Activated B cell treated with CpG ODN at 0.5 μM for 24 hours (primary cell): ENCODE measurements at regions of chr9 and their contacts with region 1.

Region 1: DNA sequence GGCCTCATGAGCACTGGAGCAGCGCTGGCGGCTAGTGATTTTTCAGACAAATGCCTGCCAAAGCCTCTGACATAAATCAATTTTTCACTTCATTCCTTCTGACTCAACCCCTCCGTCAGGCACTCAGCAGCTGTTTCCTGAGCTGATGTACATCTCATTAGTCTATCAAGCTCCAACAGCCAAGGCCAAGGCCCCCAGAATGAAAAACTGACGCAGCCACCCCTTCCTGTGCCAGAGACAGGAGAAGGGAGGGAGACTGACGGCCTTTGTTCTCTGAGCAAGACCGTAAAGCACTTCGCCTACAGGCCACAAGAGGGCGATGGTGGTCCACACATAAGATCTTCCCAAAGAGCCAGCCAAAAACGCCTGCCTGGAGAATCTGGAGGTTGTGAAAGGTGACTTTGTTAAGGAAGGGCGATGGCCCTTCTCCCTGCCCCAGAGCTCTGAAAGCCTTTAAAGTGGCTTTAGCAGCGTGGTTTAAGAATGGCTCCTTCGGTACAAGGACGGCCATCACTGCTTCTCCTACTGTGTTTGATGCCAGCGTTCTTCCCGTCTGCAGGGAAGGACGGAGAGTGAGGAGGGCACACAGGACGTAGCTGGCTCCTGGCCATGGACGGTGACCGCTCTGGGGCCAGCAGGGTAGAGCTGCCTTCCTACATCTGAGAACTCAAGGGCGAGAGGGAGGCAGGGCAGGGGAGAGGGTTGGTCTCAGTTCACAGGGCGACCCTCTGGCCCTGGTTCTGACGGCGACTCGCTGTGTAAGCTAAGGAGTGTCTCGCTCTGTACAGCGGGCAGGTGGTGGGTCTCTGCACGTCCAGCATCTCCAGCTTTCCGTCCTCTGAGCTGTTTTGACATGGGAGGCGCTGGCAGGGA is 37.0 kb downstream of the ALG2 start:
- DNase-seq: peak; percentile 76
- ATAC-seq: peak; percentile 80
- H3K4me3 Mint-ChIP-seq: peak overlapping the region; percentile 57
- H3K27ac Mint-ChIP-seq: peak overlapping the region; percentile 95
- H3K4me1 Mint-ChIP-seq: peaks cover 98% of the 10 kb centered on the region
- H3K27me3 Mint-ChIP-seq: no peaks in the 10 kb centered on the region
- CTCF ChIP-seq: peak; percentile 81

Region 2: DNA sequence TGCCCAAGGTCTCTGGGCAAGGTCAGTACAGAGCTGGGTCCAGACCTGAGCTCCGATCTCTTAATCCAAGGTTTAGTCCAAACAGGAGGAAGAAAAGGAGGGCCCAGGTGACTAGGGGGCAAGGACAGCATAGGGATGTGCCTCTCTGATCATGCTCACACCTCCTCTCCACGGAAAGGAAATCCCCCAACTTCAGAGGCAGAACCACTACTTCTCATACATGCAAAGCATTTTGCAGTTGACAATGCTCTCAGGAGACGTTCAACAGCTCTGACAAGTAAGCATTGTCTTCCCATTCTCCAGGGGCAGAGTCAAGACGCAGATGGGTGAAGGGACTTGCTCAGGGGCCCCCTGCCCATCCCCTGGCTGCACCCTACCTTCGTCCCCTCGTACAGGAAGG is 983.6 kb before region 1 on chr9:
- CTCF ChIA-PET with region 1: no interaction called
- POLR2A ChIA-PET with region 1: no interaction called
- intact Hi-C with region 1: no loop called
- DNase-seq: no peak
- ATAC-seq: peak; percentile 76
- H3K4me3 Mint-ChIP-seq: no peak overlapping the region
- H3K27ac Mint-ChIP-seq: peak overlapping the region; percentile 44
- H3K4me1 Mint-ChIP-seq: peaks cover 13% of the 10 kb centered on the region
- H3K27me3 Mint-ChIP-seq: no peaks in the 10 kb centered on the region
- CTCF ChIP-seq: no peak

Region 3: DNA sequence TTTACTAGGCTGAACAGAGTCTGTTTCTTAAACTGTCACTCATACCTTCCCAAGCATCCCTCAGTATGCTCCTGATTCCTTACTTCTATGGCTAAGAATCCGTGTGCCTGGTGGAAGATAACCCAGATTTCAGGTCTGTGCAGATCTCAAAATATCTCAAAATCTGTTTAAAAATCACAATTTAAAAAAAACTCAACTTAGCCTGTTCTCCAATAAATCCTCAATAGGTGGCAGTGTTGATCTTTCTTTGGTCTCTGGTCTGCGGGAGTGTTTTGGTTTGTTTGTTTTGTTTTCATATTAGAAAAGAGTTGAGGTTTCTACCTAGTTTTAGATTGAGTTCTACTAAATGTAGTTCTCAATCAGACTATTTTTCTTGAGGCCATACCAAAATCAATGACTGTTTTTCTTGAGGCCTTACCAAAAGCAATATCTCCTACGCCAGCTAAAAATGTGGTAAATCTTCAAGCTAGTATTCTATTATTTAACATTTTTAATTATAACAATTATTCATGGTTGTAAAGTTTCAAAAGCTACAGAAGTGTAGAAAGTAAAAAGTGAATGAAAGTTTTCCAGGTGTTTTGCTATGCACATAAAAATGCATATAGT is 21.8 kb before region 1 on chr9:
- CTCF ChIA-PET with region 1: interaction called, 120 read pairs
- POLR2A ChIA-PET with region 1: interaction called, 157 read pairs
- intact Hi-C with region 1: loop called (anchors 1 kb)
- DNase-seq: no peak
- ATAC-seq: peak; percentile 55
- H3K4me3 Mint-ChIP-seq: no peak overlapping the region
- H3K27ac Mint-ChIP-seq: peak overlapping the region; percentile 66
- H3K4me1 Mint-ChIP-seq: peaks cover 45% of the 10 kb centered on the region
- H3K27me3 Mint-ChIP-seq: no peaks in the 10 kb centered on the region
- CTCF ChIP-seq: peak; percentile 22

Region 4: GRCh38 chr9:99231711-99232110 is 47.0 kb after region 1 on chr9:
- CTCF ChIA-PET with region 1: interaction called, 89 read pairs
- POLR2A ChIA-PET with region 1: interaction called, 73 read pairs
- intact Hi-C with region 1: loop called (anchors 1 kb)
- DNase-seq: peak; percentile 46
- ATAC-seq: peak; percentile 11
- H3K4me3 Mint-ChIP-seq: peak overlapping the region; percentile 47
- H3K27ac Mint-ChIP-seq: peak overlapping the region; percentile 65
- H3K4me1 Mint-ChIP-seq: peaks cover 45% of the 10 kb centered on the region
- H3K27me3 Mint-ChIP-seq: no peaks in the 10 kb centered on the region
- CTCF ChIP-seq: no peak

Region 5: GRCh38 chr9:99513441-99514112 is 328.9 kb after region 1 on chr9:
- CTCF ChIA-PET with region 1: interaction called, 3 read pairs
- POLR2A ChIA-PET with region 1: interaction called, 7 read pairs
- intact Hi-C with region 1: loop called (anchors 5 kb)
- DNase-seq: peak; percentile 22
- ATAC-seq: peak; percentile 49
- H3K4me3 Mint-ChIP-seq: peak overlapping the region; percentile 61
- H3K27ac Mint-ChIP-seq: peak overlapping the region; percentile 84
- H3K4me1 Mint-ChIP-seq: peaks cover 88% of the 10 kb centered on the region
- H3K27me3 Mint-ChIP-seq: no peaks in the 10 kb centered on the region
- CTCF ChIP-seq: no peak

Region 6: DNA sequence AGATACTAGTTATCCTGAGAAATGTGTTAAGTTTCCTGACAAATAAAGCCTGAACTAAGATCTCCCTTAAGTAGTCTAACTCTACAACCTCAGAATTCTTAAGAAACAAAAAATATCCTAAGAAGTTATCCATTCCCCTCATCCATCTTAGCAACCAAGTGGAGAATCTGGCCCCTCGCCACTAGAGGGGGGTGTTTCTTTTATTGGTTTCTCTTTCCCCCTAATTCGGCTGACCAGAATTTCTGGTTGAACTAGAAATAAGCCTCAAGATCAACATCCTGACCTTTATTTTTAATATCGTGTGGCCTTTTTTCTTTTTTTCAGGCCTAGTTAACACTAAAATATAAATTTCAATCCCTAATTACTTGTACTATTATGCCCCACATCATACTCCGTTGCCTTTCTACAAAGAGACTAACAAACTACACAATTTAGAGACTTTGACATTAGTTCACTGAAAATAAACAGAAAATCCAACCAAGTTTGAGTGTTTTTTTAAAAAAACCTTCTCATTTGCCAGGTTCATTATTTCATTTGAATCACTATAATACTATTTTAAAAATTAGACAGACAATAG is 622.7 kb after region 1 on chr9:
- CTCF ChIA-PET with region 1: interaction called, 3 read pairs
- POLR2A ChIA-PET with region 1: no interaction called
- intact Hi-C with region 1: loop called (anchors 1 kb)
- DNase-seq: no peak
- ATAC-seq: peak; percentile 65
- H3K4me3 Mint-ChIP-seq: no peak overlapping the region
- H3K27ac Mint-ChIP-seq: peak overlapping the region; percentile 5
- H3K4me1 Mint-ChIP-seq: peaks cover 28% of the 10 kb centered on the region
- H3K27me3 Mint-ChIP-seq: no peaks in the 10 kb centered on the region
- CTCF ChIP-seq: no peak

Region 7: GRCh38 chr9:100028201-100028784 is 843.6 kb after region 1 on chr9:
- CTCF ChIA-PET with region 1: interaction called, 12 read pairs
- POLR2A ChIA-PET with region 1: no interaction called
- intact Hi-C with region 1: loop called (anchors 1 kb)
- DNase-seq: peak; percentile 59
- ATAC-seq: peak; percentile 99
- H3K4me3 Mint-ChIP-seq: no peak overlapping the region
- H3K27ac Mint-ChIP-seq: no peak overlapping the region
- H3K4me1 Mint-ChIP-seq: peaks cover 32% of the 10 kb centered on the region
- H3K27me3 Mint-ChIP-seq: no peaks in the 10 kb centered on the region
- CTCF ChIP-seq: peak; percentile 39

Region 8: DNA sequence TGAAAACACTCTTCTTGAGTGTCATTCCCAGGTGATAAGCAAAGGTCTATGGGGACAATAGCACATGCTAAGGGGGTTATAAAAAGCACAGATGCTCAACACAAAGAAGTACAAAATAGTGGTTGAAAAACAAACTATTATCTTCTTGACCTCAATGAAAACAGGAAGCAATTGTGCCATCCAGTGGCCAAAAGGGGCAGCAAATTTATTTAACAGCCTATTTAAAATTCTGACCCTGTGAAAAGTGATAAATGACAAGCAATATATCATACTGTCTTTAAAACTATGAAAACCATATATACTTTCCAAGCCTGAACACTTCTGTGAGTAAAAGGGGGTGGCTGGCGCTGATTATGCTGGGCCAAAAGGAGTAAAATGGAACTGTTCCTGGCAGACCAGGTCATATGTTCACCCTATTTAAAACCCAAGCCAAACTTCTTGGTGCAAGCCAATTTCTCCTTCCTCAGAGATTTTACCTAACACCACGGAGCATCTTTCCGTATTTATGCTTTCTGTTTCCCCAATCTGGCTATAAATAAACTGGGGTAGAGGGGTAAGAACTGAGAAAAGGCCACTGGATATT is 1138.3 kb after region 1 on chr9:
- CTCF ChIA-PET with region 1: interaction called, 7 read pairs
- POLR2A ChIA-PET with region 1: no interaction called
- intact Hi-C with region 1: loop called (anchors 1 kb)
- DNase-seq: no peak
- ATAC-seq: no peak
- H3K4me3 Mint-ChIP-seq: no peak overlapping the region
- H3K27ac Mint-ChIP-seq: no peak overlapping the region
- H3K4me1 Mint-ChIP-seq: peaks cover 2% of the 10 kb centered on the region
- H3K27me3 Mint-ChIP-seq: no peaks in the 10 kb centered on the region
- CTCF ChIP-seq: no peak